ENCODE measurements at regions of chrX and their contacts with region 1.

Region 1: DNA sequence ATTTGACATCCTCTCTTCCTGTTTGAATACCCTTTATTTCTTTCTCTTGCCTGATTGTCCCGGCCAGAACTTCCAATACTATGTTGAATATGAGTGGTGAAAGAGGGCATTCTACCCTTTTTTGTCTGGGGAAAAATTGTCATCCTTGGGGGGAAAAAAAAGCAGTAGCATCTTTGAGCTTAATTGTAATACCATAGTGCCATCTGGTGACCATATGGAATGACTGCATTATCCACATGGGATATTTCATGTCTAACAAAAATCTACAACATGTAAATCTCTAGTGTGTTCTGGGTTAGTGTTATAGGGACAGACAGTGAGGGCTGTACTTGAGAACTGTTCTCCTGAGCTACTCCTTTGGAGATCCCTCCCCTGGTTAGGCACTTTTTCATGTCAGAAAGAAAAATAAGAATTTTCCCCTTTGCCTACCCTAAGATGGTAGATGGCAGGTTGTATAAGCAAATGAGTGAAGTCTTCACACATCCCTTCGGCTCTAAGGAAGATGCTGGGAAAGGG is 26.0 kb downstream of the CAPN6 start:
- DNase-seq: no peak
- ATAC-seq: no peak
- H3K4me3 ChIP-seq: no peak overlapping the region
- H3K27ac ChIP-seq: no peak overlapping the region
- H3K4me1 ChIP-seq: no peaks in the 10 kb centered on the region
- H3K27me3 ChIP-seq: no peaks in the 10 kb centered on the region

Region 2: GRCh38 chrX:110863883-110864282 is 380.4 kb before region 1 on chrX:
- intact Hi-C with region 1: loop called in 1 of 2 experiments (anchors 10 kb)
- DNase-seq: no peak
- ATAC-seq: no peak
- H3K4me3 ChIP-seq: no peak overlapping the region
- H3K27ac ChIP-seq: no peak overlapping the region
- H3K4me1 ChIP-seq: no peaks in the 10 kb centered on the region
- H3K27me3 ChIP-seq: no peaks in the 10 kb centered on the region

Region 3: DNA sequence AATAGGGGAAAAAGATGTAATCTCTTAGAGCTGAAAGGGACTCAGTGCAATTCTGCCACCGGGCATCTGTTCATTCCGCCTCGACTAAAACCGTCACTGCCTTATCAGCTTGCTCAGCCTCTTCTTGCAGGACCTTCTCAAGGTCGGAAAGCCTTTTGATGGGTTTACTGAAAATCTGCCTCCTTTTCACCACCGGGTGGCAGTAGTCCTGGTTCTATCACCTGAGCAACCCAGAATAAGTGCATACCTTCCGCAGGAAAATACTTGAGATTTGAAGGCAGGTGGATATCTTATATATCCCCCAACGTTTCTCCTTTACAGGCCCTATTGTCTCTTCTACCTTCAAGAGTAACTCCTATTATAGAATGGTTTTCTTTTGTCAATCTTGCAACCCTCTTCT is 251.7 kb before region 1 on chrX:
- intact Hi-C with region 1: loop called (anchors 5 to 10 kb)
- DNase-seq: no peak
- ATAC-seq: no peak
- H3K4me3 ChIP-seq: no peak overlapping the region
- H3K27ac ChIP-seq: no peak overlapping the region
- H3K4me1 ChIP-seq: no peaks in the 10 kb centered on the region
- H3K27me3 ChIP-seq: no peaks in the 10 kb centered on the region

Region 4: DNA sequence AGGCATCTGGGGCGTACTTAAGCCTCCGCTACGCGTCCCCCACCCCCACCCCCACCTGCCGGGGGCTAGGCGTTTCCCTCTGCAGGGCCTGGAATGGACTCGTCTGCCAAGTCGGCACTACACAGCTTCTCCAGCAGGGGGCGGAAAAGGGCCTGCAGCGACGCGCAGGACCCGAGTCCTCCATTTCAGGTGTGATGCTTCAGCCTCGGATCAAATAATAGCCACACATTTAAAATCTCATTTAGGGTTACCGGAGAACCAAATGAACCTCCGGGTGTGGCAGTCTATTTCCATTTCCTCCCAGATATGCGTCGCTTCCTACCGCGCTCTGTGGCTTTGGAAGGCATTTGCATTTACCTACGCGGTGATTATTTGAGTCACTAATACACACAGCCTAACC is 145.4 kb before region 1 on chrX:
- intact Hi-C with region 1: loop called in 1 of 2 experiments (anchors 10 kb)
- DNase-seq: peak; percentile 68 to 86
- ATAC-seq: no peak
- H3K4me3 ChIP-seq: no peak overlapping the region
- H3K27ac ChIP-seq: no peak overlapping the region
- H3K4me1 ChIP-seq: no peaks in the 10 kb centered on the region
- H3K27me3 ChIP-seq: no peaks in the 10 kb centered on the region

Region 5: DNA sequence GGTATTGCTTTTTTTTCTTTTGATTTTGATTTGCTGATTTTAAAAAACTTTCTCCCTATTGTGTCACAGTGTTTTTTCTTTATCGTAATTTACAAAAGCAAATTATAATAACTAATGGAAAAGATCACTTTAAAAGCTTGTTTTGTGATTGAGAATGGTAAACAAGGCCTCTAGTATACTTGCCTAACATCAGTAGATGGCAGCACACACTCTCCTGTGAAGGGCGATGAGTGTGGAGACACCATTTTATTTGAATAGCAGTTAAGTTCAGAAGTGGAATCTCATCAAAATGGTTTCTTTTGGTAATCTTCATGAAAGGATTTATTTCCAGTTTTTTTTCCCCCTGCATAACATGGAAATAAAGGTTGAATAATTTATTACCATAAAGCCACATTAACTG is 76.0 kb before region 1 on chrX:
- intact Hi-C with region 1: loop called in 1 of 2 experiments (anchors 10 kb)
- DNase-seq: no peak
- ATAC-seq: no peak
- H3K4me3 ChIP-seq: no peak overlapping the region
- H3K27ac ChIP-seq: no peak overlapping the region
- H3K4me1 ChIP-seq: no peaks in the 10 kb centered on the region
- H3K27me3 ChIP-seq: no peaks in the 10 kb centered on the region

Region 6: DNA sequence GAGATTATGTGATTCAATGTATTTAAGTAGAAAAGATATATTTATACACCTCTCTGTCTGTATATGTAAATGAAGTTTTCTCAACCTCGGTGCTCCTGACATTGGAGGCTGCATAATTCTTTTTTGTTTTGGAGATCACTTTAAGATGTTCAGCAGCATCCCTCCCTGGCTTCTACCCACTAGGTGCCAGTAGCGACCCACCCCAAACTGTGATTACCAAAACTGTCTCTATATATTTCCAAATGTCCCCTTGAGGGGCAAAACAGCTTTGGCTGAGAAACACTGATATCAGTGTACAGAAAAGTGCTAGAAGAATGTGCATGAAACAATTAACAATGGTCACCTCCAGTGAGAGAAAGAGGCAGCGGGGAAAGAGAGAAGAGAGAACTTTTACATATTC is 116.5 kb after region 1 on chrX:
- intact Hi-C with region 1: no loop called
- DNase-seq: no peak
- ATAC-seq: no peak
- H3K4me3 ChIP-seq: no peak overlapping the region
- H3K27ac ChIP-seq: no peak overlapping the region
- H3K4me1 ChIP-seq: no peaks in the 10 kb centered on the region
- H3K27me3 ChIP-seq: no peaks in the 10 kb centered on the region